ENCODE measurements at regions of chr5 and their contacts with region 1.

Region 1: DNA sequence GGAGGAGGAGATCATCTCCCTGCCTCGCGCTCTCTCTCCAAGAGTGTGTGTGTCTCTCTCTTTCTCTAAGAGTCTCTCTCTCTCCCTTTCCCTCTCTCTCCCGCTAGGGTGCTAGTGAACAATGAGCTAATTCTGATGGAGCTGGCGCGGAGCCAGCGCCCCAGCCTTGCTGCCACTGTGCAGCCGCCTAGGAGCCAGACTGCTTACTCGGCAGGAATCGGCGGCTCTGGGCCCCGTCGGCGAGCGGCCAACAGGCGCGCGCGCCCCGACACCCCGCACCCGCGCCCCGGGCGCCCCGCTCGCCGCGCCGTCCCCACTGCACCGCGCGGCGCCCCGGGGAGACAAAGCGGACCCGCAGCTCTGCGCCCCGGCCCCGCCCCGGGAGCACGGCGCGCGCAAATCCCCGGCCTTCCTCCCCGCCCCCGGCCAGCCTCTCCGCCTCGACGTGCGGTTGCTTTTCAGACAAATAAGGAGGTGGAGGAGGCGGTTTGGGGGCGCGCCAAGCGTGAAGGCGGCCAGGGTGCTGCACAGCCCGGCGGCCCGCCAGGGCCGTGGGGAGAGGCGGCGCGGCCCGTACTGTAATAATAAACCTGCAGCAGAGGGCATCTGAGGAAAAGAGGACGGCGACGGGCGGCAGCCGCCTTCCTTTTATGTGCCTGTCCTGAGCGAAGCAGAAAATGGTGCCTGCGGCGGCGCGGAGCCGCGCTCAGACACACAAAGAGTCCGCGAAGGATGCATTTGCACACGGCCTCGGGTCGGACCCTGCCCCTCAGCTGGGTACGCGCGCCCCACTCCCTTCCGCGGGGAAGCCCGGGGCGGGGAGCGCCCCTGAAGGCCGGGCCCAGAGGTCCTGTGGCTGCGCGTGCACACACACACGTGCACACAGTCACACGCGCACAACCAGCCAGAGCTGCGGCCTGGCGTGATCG is 625 bp upstream of the NREP start:
- DNase-seq: peak; percentile 93 to 96
- ATAC-seq: peak; percentile 85 to 92 (median 88)
- H3K4me3 ChIP-seq: peak overlapping the region; percentile 78
- H3K27ac ChIP-seq: peak overlapping the region; percentile 90
- H3K4me1 ChIP-seq: peaks cover 36% of the 10 kb centered on the region
- H3K27me3 ChIP-seq: no peaks in the 10 kb centered on the region
- CTCF ChIP-seq: peak; percentile 28

Region 2: GRCh38 chr5:111680737-111681413 is 76.7 kb before region 1 on chr5:
- intact Hi-C with region 1: loop called in 1 of 2 experiments (anchors 2 kb)
- DNase-seq: peak; percentile 18 to 66
- ATAC-seq: peak; percentile 86 to 98 (median 92)
- H3K4me3 ChIP-seq: no peak overlapping the region
- H3K27ac ChIP-seq: peak overlapping the region; percentile 57
- H3K4me1 ChIP-seq: peaks cover 18% of the 10 kb centered on the region
- H3K27me3 ChIP-seq: no peaks in the 10 kb centered on the region
- CTCF ChIP-seq: no peak

Region 3: DNA sequence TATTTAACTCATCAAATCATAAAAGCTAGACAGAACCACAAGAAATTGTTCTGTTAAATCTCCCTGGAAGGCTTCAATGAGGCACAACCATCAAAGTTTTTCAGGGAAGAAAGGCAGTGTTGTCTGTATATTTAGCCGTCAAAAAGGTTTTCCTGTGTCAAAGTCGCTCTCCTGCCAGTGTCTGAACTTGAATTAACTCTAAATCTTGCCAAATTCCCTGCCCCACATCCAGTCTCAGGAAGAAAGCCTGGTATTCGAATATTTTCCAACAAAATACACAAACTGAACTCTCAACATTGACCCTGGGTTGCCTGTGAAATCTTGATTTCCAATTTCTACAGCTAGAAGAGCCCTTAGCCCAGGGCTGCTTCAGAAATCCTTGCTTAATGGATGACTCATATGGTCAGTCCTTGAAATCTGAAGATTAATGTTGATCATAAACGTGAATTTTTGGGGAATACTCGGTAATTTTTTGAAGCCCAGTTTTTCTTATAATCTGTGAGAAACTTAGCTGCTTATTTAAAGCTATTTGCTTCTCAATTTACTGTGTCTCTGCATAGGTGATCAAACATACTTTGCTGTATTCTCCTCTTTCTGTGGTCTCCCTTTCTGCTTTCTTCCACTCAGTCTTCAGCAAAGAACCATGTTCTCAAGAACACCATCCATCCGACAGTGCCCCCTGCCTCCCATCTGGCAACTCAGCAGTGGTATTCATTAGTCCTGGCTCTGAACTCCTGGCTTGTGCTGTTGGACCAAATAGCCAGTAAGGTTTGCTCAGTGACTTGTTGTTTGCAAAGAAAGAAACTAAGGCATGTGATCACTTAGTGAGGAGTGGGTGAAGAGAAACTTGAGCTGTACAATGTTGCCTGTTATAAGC is 59.5 kb before region 1 on chr5:
- intact Hi-C with region 1: no loop called
- DNase-seq: no peak
- ATAC-seq: no peak
- H3K4me3 ChIP-seq: no peak overlapping the region
- H3K27ac ChIP-seq: no peak overlapping the region
- H3K4me1 ChIP-seq: no peaks in the 10 kb centered on the region
- H3K27me3 ChIP-seq: no peaks in the 10 kb centered on the region
- CTCF ChIP-seq: peak; percentile 10